Dendritic cell treated with granulocyte-macrophage colony-stimulating factor and Interleukin-4, amounts not matched to agents 40 ng/mL and 50 ng/mL, for 4 days (primary cell): ENCODE measurements at regions of chr17 and their contacts with region 1.

Region 1: GRCh38 chr17:75319904-75320691 is 30.9 kb upstream of the SLC25A19 start:
- H3K4me3 Mint-ChIP-seq: no peak overlapping the region
- H3K27ac Mint-ChIP-seq: peak overlapping the region; percentile 50
- H3K4me1 Mint-ChIP-seq: peaks cover 38% of the 10 kb centered on the region
- H3K27me3 Mint-ChIP-seq: no peaks in the 10 kb centered on the region

Region 2: DNA sequence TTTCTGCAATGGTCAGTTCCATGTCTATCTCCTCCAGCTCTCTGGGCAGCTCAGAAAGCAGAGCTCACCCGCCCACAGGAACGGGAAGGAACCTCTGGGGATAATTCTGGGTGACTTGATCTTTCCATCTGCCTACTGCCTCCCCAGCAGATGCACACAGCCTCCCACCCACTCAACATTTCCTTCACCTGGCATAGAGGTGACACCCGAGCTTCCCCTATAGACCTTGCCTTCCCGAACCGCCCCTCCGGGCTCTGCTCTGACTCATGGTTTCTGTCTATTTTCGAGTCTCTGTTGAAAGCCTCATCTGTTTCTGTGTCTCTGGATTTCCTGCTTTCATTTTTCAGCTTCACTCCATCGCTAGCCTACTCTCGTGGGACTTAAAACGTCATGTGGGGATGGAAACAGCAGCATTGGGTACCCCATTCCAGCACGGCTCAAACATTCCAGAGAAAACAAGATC is 70.1 kb before region 1 on chr17:
- intact Hi-C with region 1: no loop called
- H3K4me3 Mint-ChIP-seq: peak overlapping the region; percentile 34
- H3K27ac Mint-ChIP-seq: peak overlapping the region; percentile 49
- H3K4me1 Mint-ChIP-seq: peaks cover 74% of the 10 kb centered on the region
- H3K27me3 Mint-ChIP-seq: no peaks in the 10 kb centered on the region

Region 3: GRCh38 chr17:75289115-75289831 is 30.8 kb before region 1 on chr17 and contains the start of gene SLC25A19:
- intact Hi-C with region 1: loop called (anchors 5 kb)
- H3K4me3 Mint-ChIP-seq: peak within 1 kb of the TSS; percentile 92
- H3K27ac Mint-ChIP-seq: peak within 1 kb of the TSS; percentile 97
- H3K4me1 Mint-ChIP-seq: peaks cover 71% of the 10 kb centered on the region
- H3K27me3 Mint-ChIP-seq: no peaks in the 10 kb centered on the region